ENCODE measurements at regions of chr10 and their contacts with region 1.

Region 1: DNA sequence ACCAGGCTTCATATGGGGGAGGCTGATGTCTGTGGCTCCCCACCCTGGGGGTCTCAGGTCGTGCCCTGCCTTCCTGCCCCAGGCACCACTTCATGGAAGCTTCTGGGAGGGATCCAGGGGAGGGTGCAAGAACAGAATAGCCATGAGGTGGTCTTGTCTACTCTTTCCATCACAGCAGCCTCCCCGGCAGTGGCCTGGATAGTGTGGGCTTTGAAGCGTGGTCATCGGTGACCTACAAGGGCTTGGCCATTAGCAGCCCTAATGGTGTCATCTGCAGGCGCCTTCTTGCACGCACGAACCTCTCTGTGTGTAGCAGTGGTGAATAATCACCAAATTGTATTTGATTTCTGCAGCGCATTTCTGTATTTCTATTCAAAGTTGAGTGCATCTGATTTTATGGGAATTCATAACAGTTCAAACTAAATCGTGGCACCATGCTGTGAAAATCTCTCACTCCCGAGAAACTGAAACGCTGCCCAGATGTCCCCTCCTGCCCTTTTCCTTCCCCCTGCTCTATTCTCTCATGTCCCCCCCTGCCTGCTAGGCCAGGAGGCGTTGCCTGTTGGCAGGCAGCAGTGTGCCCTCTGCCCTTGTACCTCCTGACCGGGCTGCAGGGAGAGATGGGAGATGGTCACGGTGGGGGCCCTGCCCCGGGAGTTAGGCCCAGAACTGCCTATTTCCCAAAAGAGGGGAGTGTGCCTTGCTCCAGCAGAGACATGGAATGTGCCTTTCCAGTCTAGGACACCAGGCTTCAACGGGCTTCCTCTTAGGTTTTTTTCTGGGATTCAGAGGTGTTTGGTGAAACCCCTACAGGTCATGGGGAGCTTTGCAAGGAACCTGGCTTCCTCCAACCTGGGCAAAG is 34.8 kb downstream of the CDH23 start:
- DNase-seq: peak; percentile 43
- ATAC-seq: peak; percentile 84
- H3K4me3 Mint-ChIP-seq: no peak overlapping the region
- H3K27ac Mint-ChIP-seq: no peak overlapping the region
- H3K4me1 Mint-ChIP-seq: peaks cover 9% of the 10 kb centered on the region
- H3K27me3 Mint-ChIP-seq: no peaks in the 10 kb centered on the region; the same call in 1 of the 2 replicates
- CTCF ChIP-seq: no peak

Region 2: GRCh38 chr10:71128311-71128980 is 303.0 kb before region 1 on chr10:
- CTCF ChIA-PET with region 1: no interaction called
- POLR2A ChIA-PET with region 1: no interaction called
- DNase-seq: no peak
- ATAC-seq: no peak
- H3K4me3 Mint-ChIP-seq: no peak overlapping the region
- H3K27ac Mint-ChIP-seq: no peak overlapping the region
- H3K4me1 Mint-ChIP-seq: peaks cover 14% of the 10 kb centered on the region
- H3K27me3 Mint-ChIP-seq: peaks cover 11% of the 10 kb centered on the region
- CTCF ChIP-seq: no peak

Region 3: GRCh38 chr10:71419750-71420149 is 11.7 kb before region 1 on chr10:
- CTCF ChIA-PET with region 1: interaction called, 14 read pairs
- POLR2A ChIA-PET with region 1: no interaction called
- DNase-seq: no peak
- ATAC-seq: no peak
- H3K4me3 Mint-ChIP-seq: no peak overlapping the region
- H3K27ac Mint-ChIP-seq: no peak overlapping the region
- H3K4me1 Mint-ChIP-seq: peaks cover under 1% of the 10 kb centered on the region; the same call in 1 of the 2 replicates
- H3K27me3 Mint-ChIP-seq: peaks cover 6% of the 10 kb centered on the region
- CTCF ChIP-seq: no peak

Region 4: DNA sequence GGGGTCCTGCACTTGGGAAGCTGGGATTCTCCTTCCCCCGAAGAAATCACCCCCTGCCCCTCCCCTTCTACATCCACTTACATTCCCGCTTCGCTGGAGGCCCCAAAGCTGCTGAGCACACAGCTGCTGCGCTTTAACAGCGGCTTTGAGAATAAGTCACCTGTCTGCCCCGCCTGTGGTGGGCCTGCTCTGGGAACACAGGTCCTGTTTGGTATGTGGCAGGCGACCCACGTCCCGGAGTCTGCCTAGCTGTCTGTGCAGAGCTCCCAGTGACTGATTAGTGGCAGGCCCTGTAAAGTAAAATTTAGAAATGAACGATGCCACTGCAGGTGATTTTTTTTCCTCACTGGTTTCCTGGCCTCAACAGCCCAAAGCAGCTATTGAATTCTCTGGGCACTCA is 12.2 kb after region 1 on chr10:
- CTCF ChIA-PET with region 1: interaction called, 14 read pairs
- POLR2A ChIA-PET with region 1: no interaction called
- DNase-seq: peak; percentile 30
- ATAC-seq: peak; percentile 52
- H3K4me3 Mint-ChIP-seq: no peak overlapping the region
- H3K27ac Mint-ChIP-seq: no peak overlapping the region
- H3K4me1 Mint-ChIP-seq: peaks cover 7% of the 10 kb centered on the region
- H3K27me3 Mint-ChIP-seq: no peaks in the 10 kb centered on the region
- CTCF ChIP-seq: no peak